OCI-LY7 (cell line): ENCODE measurements at regions of chr14 and their contacts with region 1.

Region 1: GRCh38 chr14:57221931-57222330 is 46.8 kb downstream of the EXOC5 start:
- DNase-seq: no peak
- H3K4me3 ChIP-seq: no peak overlapping the region
- H3K27ac ChIP-seq: no peak overlapping the region
- H3K4me1 ChIP-seq: no peaks in the 10 kb centered on the region
- CTCF ChIP-seq: no peak

Region 2: GRCh38 chr14:57199921-57200320 is 22.0 kb before region 1 on chr14:
- CTCF ChIA-PET with region 1: no interaction called
- POLR2A ChIA-PET with region 1: no interaction called
- intact Hi-C with region 1: no loop called
- DNase-seq: no peak
- H3K4me3 ChIP-seq: no peak overlapping the region
- H3K27ac ChIP-seq: no peak overlapping the region
- H3K4me1 ChIP-seq: no peaks in the 10 kb centered on the region
- CTCF ChIP-seq: no peak

Region 3: GRCh38 chr14:57293866-57294837 is 72.2 kb after region 1 on chr14:
- CTCF ChIA-PET with region 1: no interaction called
- POLR2A ChIA-PET with region 1: no interaction called
- intact Hi-C with region 1: loop called (anchors 5 kb)
- DNase-seq: peak; percentile 31
- H3K4me3 ChIP-seq: no peak overlapping the region
- H3K27ac ChIP-seq: no peak overlapping the region
- H3K4me1 ChIP-seq: no peaks in the 10 kb centered on the region
- CTCF ChIP-seq: peak; percentile 78